ENCODE measurements at regions of chr16 and their contacts with region 1.

Region 1: GRCh38 chr16:2223375-2224182 is at the start of gene E4F1:
- DNase-seq: peak; percentile 96 to 100
- H3K4me3 ChIP-seq: peak within 1 kb of the TSS; percentile 89 to 92
- H3K27ac ChIP-seq: peak within 1 kb of the TSS; percentile 80
- H3K4me1 ChIP-seq: peaks cover 4 to 15% of the 10 kb centered on the region in 2 donors
- H3K27me3 ChIP-seq: no peaks in the 10 kb centered on the region
- CTCF ChIP-seq: no peak
- total RNA-seq, gene E4F1: 39.7 TPM

Region 2: DNA sequence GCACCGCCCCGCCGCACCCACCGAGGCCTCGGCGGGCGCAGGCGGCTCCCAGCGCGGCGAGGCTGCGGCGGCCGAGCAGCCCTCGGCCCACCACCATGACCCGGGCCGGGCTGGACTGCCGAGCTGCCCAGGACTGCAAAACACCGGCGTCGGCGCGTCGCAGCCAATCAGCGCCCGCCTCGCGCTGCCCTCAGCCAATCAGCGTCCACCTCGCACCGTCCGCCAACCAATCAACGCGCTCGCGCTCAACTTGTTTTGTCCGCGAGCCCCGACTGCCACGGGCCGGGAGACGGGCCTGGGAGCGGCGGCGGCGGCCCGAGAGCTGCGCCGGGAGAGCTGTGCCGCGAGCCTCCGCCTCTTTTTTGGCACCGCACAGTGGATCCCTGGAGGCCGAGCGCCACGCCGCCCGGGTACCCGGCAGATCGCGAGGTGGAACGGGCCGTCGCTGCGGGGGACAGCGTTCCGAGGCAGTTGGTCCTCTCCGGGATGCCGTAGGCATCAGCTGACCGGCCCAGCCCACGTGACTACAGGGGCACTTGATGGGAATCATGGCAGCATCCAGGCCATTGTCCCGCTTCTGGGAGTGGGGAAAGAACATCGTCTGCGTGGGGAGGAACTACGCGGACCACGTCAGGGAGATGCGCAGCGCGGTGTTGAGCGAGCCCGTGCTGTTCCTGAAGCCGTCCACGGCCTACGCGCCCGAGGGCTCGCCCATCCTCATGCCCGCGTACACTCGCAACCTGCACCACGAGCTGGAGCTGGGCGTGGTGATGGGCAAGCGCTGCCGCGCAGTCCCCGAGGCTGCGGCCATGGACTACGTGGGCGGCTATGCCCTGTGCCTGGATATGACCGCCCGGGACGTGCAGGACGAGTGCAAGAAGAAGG is 396.6 kb before region 1 on chr16 and contains the starts of genes FAHD1 and HAGH:
- intact Hi-C with region 1: loop called (anchors 2 kb)
- DNase-seq: peak; percentile 73 to 94
- H3K4me3 ChIP-seq: peak within 1 kb of the TSS; percentile 72 to 81
- H3K27ac ChIP-seq: peak within 1 kb of the TSS; percentile 70 to 72
- H3K4me1 ChIP-seq: peaks cover 12 to 37% of the 10 kb centered on the region in 2 donors
- H3K27me3 ChIP-seq: no peaks in the 10 kb centered on the region
- CTCF ChIP-seq: no peak
- total RNA-seq, gene FAHD1: 233 TPM
- total RNA-seq, gene HAGH: 177 TPM

Region 3: GRCh38 chr16:1971796-1972489 is 251.6 kb before region 1 on chr16 and contains the start of gene TBL3:
- intact Hi-C with region 1: loop called (anchors 5 kb)
- DNase-seq: peak; percentile 70 to 97
- H3K4me3 ChIP-seq: peak within 1 kb of the TSS; percentile 90 to 95
- H3K27ac ChIP-seq: peak within 1 kb of the TSS; percentile 90 to 93
- H3K4me1 ChIP-seq: peaks cover 14 to 16% of the 10 kb centered on the region in 2 donors
- H3K27me3 ChIP-seq: no peaks in the 10 kb centered on the region
- CTCF ChIP-seq: no peak
- total RNA-seq, gene TBL3: 55.7 TPM

Region 4: DNA sequence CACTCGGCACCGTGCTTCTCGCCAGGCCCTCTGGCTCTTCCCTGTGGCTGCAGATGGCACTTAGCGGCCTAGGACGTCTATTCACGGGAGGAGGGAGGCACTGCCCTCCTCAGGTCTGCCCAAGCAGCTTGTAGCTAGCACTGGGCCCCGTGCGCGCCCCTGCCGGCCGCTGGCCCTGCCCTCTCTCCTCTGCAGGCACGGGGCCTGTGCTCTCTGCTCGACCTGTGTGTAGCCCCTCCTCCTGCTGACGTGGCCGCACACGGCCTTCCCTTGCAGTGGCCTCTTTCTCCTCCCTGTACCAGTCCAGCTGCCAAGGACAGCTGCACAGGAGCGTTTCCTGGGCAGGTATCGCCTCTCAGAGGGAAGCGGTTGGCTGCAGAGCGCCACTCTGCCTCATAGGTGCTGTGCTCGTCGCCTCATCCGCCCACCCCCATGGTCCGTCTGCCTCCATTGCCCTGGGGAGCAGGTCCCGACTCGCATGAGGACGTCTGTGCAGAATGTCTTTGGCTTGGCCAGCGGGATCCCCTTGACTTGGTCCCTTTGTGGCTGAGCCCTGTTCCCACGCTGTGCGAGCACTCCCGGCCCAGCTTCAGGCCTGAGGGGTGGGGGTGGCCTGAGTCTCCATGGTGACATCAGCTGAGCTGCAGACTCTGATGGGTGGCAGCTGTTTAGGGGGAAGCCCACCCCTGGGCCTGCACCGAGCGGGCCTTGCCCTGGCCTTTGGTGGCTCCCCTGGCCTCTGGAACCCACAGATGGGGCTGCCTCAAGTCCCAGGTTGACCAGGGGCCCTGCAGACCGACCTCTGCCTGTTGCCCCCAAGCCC is 141.2 kb before region 1 on chr16:
- intact Hi-C with region 1: no loop called
- DNase-seq: no peak
- H3K4me3 ChIP-seq: no peak overlapping the region
- H3K27ac ChIP-seq: no peak overlapping the region
- H3K4me1 ChIP-seq: no peaks in the 10 kb centered on the region
- H3K27me3 ChIP-seq: no peaks in the 10 kb centered on the region
- CTCF ChIP-seq: no peak

Region 5: GRCh38 chr16:2205104-2205966 is 18.2 kb before region 1 on chr16 and contains the start of gene MLST8:
- intact Hi-C with region 1: loop called (anchors 1 kb)
- DNase-seq: peak; percentile 25 to 90
- H3K4me3 ChIP-seq: peak within 1 kb of the TSS; percentile 80 to 97
- H3K27ac ChIP-seq: peak within 1 kb of the TSS; percentile 96 to 98
- H3K4me1 ChIP-seq: peaks cover 4 to 11% of the 10 kb centered on the region in 2 donors
- H3K27me3 ChIP-seq: no peaks in the 10 kb centered on the region
- CTCF ChIP-seq: peak in 2 of 3 experiments; percentile 6 to 10
- total RNA-seq, gene MLST8: 23.7 TPM

Region 6: DNA sequence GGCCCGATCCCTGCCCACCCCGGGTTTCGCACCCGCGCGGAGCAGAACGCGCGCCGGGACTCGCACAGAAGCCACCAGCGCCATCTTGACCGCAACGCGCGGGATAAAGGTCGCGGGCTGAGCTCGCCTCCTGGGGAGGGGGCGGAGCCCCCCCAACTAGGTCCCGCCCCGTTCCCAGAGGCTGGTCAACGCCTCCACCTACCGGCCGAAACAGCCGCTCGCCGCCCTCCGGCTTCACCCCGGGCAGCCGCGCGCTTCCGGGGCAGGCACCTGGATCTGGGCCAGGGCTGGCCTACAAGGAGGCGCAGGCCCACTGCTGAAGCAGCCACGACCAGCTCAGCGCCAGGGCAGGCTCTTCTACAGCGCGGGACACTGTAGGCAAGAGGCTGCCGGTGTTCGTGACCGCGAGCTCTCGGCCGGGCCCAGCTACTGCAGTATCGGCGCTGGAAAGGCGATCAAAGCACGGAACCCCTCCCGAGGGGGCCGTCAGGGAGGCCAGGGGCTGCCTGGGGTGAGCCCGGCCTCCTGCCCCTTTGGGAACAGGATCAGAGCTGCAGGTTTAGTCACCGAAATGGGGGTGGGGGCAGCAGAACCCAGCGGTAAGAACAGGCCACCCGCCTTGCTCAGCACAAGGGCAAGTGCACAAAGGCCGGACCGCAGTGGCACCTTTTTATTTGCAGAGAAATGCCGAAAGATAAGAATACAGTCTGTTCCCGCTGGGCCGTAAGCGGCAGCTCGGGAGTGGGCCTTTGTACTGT is 28.1 kb after region 1 on chr16 and contains the start of gene ECI1:
- intact Hi-C with region 1: loop called (anchors 1 kb)
- DNase-seq: peak; percentile 74 to 98
- H3K4me3 ChIP-seq: peak within 1 kb of the TSS; percentile 80 to 86
- H3K27ac ChIP-seq: peak within 1 kb of the TSS; percentile 82 to 88
- H3K4me1 ChIP-seq: peaks cover 10 to 11% of the 10 kb centered on the region in 2 donors
- H3K27me3 ChIP-seq: no peaks in the 10 kb centered on the region
- CTCF ChIP-seq: peak; percentile 73 to 76 (median 74)
- total RNA-seq, gene ECI1: 10.9 TPM

Region 7: GRCh38 chr16:2267913-2268666 is 44.5 kb after region 1 on chr16 and contains the start of gene RNPS1:
- intact Hi-C with region 1: loop called (anchors 5 kb)
- DNase-seq: peak; percentile 77 to 98
- H3K4me3 ChIP-seq: peak within 1 kb of the TSS; percentile 63 to 92
- H3K27ac ChIP-seq: peak within 1 kb of the TSS; percentile 95 to 98
- H3K4me1 ChIP-seq: peaks cover 10 to 21% of the 10 kb centered on the region in 2 donors
- H3K27me3 ChIP-seq: no peaks in the 10 kb centered on the region
- CTCF ChIP-seq: no peak
- total RNA-seq, gene RNPS1: 134 TPM

Region 8: DNA sequence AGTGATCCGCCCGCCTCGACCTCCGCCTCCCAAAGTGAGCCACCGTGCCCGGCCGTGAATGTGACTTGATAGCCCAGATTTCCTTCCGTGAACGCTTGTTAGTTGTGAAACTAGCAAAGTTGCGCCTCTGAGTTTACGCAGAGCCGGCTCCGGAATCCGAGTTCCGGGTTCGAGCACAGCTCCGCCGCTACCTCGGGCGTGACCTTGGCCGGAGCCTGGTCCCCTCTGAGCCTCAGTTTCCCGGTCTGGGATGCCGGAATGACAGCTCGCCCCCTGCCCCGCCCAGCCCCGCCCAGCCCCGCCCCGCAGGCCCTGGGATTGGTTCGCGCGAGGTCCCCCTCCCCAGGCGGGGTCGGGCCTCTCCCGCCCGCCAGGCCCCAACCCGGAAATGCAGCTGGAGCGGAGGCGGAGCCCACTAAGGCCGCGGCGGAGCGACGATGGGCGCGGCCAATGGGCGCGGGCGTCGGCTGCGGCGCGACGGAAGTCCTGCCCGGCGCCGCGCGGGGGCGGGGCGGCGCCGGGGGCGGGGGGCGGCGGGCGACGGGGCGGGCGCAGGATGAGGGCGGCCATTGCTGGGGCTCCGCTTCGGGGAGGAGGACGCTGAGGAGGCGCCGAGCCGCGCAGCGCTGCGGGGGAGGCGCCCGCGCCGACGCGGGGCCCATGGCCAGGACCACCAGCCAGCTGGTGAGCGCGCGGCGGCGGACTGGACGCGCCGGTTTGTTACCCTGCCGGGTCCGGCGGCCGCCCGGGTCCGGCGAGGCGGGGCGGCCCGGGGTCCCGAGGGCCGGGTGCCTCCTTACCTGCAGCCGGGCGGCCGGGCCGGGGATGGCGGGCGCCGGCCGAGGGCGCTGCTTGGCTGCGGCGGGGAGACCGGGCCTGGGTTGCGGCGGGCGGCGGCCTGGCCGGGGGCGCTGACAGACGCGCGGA is 314.1 kb after region 1 on chr16 and contains the start of gene PDPK1:
- intact Hi-C with region 1: loop called (anchors 1 kb)
- DNase-seq: peak; percentile 80 to 96
- H3K4me3 ChIP-seq: peak within 1 kb of the TSS; percentile 82 to 83
- H3K27ac ChIP-seq: peak within 1 kb of the TSS; percentile 75 to 82
- H3K4me1 ChIP-seq: peaks cover 7 to 25% of the 10 kb centered on the region in 2 donors
- H3K27me3 ChIP-seq: no peaks in the 10 kb centered on the region
- CTCF ChIP-seq: no peak
- total RNA-seq, gene PDPK1: 23.2 TPM

Measured in ascending aorta (tissue), 2 donors.